ENCODE measurements at regions of chr4 and their contacts with region 1.

Region 1: GRCh38 chr4:153221783-153222706 is 17.8 kb downstream of the TRIM2 start:
- DNase-seq: peak; percentile 80
- H3K4me3 Mint-ChIP-seq: peak overlapping the region; percentile 87
- H3K27ac Mint-ChIP-seq: peak overlapping the region; percentile 85
- H3K4me1 Mint-ChIP-seq: peaks cover 20% of the 10 kb centered on the region
- H3K27me3 Mint-ChIP-seq: no peaks in the 10 kb centered on the region
- CTCF ChIP-seq: no peak

Region 2: GRCh38 chr4:152606754-152607153 is 615.3 kb before region 1 on chr4:
- CTCF ChIA-PET with region 1: no interaction called
- POLR2A ChIA-PET with region 1: no interaction called
- intact Hi-C with region 1: no loop called
- DNase-seq: no peak
- H3K4me3 Mint-ChIP-seq: no peak overlapping the region
- H3K27ac Mint-ChIP-seq: no peak overlapping the region
- H3K4me1 Mint-ChIP-seq: no peaks in the 10 kb centered on the region
- H3K27me3 Mint-ChIP-seq: no peaks in the 10 kb centered on the region
- CTCF ChIP-seq: no peak

Region 3: DNA sequence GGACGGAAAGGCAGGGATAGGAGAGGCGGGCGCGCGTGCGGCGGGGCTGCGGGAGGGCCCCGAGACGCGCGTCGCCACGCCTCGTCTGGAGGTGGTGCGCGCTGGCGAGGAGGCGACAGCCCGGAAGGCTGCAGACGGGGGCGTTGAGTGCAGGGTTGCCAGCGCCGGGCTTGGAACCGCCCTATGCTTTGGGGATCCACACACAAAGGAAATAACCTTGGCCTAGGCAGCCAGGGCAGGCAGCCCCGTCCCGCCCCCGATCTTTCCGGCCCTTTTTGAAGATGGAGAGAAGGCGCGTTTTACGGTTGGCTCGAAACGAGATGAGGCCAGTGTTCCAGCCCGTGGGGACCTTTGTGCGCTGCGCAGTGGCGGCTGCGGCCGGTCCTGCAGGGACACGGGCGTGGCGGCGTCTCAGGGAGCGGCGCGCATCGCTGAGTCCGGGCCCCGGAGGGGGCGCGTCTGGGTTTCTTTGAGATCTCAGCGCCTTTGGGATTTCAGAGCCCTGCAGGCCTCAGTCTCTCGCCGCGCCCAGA is 68.6 kb before region 1 on chr4:
- CTCF ChIA-PET with region 1: no interaction called
- POLR2A ChIA-PET with region 1: interaction called, 23 read pairs
- intact Hi-C with region 1: loop called (anchors 2 kb)
- DNase-seq: peak; percentile 52
- H3K4me3 Mint-ChIP-seq: peak overlapping the region; percentile 81
- H3K27ac Mint-ChIP-seq: no peak overlapping the region
- H3K4me1 Mint-ChIP-seq: no peaks in the 10 kb centered on the region
- H3K27me3 Mint-ChIP-seq: peaks cover 13% of the 10 kb centered on the region
- CTCF ChIP-seq: no peak

Region 4: GRCh38 chr4:153232768-153233167 is 10.7 kb after region 1 on chr4:
- CTCF ChIA-PET with region 1: interaction called, 3 read pairs
- POLR2A ChIA-PET with region 1: interaction called, 22 read pairs
- intact Hi-C with region 1: loop called (anchors 1 kb)
- DNase-seq: peak; percentile 23
- H3K4me3 Mint-ChIP-seq: peak overlapping the region; percentile 17
- H3K27ac Mint-ChIP-seq: peak overlapping the region; percentile 47
- H3K4me1 Mint-ChIP-seq: peaks cover 32% of the 10 kb centered on the region
- H3K27me3 Mint-ChIP-seq: no peaks in the 10 kb centered on the region
- CTCF ChIP-seq: no peak

Region 5: GRCh38 chr4:153249199-153250041 is 27.4 kb after region 1 on chr4:
- CTCF ChIA-PET with region 1: interaction called, 4 read pairs
- POLR2A ChIA-PET with region 1: interaction called, 16 read pairs
- intact Hi-C with region 1: no loop called
- DNase-seq: peak; percentile 57
- H3K4me3 Mint-ChIP-seq: peak overlapping the region; percentile 73
- H3K27ac Mint-ChIP-seq: peak overlapping the region; percentile 62
- H3K4me1 Mint-ChIP-seq: peaks cover 4% of the 10 kb centered on the region
- H3K27me3 Mint-ChIP-seq: no peaks in the 10 kb centered on the region
- CTCF ChIP-seq: no peak

Region 6: DNA sequence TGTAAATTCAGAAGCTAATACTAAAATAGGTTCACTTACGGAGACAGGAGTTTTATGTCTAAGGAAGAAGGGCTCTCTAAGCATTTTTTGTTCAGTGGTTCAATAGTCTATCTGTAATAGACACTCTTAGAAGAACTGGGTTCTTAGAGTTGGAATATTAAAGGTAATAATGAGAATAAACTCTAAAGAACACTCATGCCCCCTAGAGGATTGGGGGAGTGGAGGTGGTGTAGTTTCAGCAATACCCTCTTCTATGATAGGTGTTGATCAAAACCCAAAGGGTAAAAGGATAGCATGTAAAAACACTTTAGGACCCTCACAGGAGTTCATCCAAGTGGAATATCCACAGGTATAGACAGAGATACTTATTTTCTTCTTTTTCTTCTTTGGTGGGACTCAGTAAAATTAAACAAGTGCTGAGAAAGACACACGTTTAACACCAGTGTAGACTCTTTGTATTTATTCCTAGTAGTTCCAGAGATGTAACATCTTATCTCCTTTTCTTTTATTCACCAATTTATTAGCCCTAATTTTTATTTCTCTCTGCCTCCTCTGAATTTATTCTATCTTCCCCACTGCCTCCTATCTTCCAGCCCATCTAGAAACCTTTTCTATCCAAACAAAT is 96.8 kb after region 1 on chr4:
- CTCF ChIA-PET with region 1: interaction called, 3 read pairs
- POLR2A ChIA-PET with region 1: no interaction called
- intact Hi-C with region 1: loop called (anchors 5 kb)
- DNase-seq: peak; percentile 68
- H3K4me3 Mint-ChIP-seq: no peak overlapping the region
- H3K27ac Mint-ChIP-seq: no peak overlapping the region
- H3K4me1 Mint-ChIP-seq: no peaks in the 10 kb centered on the region
- H3K27me3 Mint-ChIP-seq: no peaks in the 10 kb centered on the region
- CTCF ChIP-seq: peak; percentile 57

Measured in MCF 10A (cell line).